A673 (cell line): ENCODE measurements at regions of chr2 and their contacts with region 1.

Region 1: DNA sequence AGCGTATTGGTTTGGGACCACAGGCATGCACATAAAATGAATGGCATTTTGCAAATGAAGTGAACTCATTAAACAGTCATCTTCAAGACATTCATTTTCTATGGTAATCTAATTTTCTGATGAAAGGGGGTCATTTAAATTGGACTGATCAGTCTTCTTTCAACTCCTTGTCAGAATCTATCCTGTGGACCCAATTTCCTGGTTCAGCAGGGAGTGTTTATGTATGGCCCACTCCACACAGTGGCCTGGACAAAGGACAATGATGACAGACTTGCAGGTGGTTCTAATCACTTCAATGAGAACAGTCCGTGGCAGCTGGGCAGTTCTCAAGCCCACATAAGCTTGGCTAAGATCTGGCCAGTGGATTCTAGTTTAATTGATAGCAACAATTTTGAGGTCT is 448.1 kb downstream of the DCDC2C start:
- DNase-seq: peak; percentile 94
- H3K4me3 ChIP-seq: no peak overlapping the region
- H3K27ac ChIP-seq: peak overlapping the region; percentile 96
- H3K4me1 ChIP-seq: peaks cover 31% of the 10 kb centered on the region
- H3K27me3 ChIP-seq: no peaks in the 10 kb centered on the region
- CTCF ChIP-seq: no peak

Region 2: DNA sequence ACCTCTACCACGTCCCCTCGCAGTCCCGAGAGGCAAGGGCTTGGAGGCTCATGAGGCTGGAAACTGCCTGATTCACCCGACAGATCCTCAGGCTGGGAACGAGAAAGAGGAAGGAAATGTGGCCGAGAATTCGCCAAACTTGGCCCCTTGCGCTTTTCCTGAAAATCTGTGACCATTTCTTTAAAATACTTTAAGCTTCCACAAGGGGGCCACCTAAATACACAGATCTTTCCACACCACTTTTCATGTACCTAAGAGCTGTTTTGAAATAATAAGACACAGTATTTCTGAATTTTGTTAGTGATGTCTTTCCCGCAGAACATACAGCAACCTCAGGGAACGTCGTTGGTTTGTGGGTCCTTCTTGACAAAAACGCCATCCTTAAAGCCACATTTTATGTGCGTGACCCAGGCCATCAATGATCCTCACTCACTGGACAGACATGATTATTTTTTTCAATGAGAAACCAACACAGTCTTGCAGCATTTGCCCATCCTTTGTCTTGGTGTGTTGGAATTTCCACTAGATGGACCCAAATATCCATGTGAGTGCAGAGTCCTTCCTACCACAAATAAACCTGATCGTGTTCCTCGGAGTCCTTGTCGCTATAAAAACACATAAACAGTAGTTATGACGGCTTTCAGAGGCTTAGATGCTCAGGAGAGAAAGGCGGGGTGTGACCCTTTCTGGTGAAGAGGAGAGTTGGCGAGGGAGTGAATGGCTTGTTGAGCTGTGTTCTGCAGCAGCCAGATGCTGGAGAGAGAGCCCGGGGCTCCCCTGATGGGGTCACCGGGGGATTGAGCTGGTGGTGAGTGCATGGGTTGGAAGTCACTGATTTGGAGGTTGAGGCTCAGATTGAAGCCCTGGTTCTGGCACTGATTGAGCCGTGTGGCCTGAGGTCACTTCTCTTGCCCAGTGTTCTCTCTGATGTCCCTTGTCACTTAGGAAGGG is 423.1 kb before region 1 on chr2:
- CTCF ChIA-PET with region 1: no interaction called
- POLR2A ChIA-PET with region 1: no interaction called
- intact Hi-C with region 1: loop called (anchors 5 kb)
- DNase-seq: peak; percentile 83
- H3K4me3 ChIP-seq: peak overlapping the region; percentile 12
- H3K27ac ChIP-seq: no peak overlapping the region
- H3K4me1 ChIP-seq: peaks cover 6% of the 10 kb centered on the region
- H3K27me3 ChIP-seq: no peaks in the 10 kb centered on the region
- CTCF ChIP-seq: peak; percentile 65

Region 3: GRCh38 chr2:3970791-3971652 is 180.5 kb before region 1 on chr2:
- CTCF ChIA-PET with region 1: no interaction called
- POLR2A ChIA-PET with region 1: no interaction called
- intact Hi-C with region 1: loop called (anchors 5 kb)
- DNase-seq: no peak
- H3K4me3 ChIP-seq: no peak overlapping the region
- H3K27ac ChIP-seq: no peak overlapping the region
- H3K4me1 ChIP-seq: peaks cover 4% of the 10 kb centered on the region
- H3K27me3 ChIP-seq: no peaks in the 10 kb centered on the region
- CTCF ChIP-seq: no peak

Region 4: GRCh38 chr2:4219571-4219970 is 68.0 kb after region 1 on chr2:
- CTCF ChIA-PET with region 1: no interaction called
- POLR2A ChIA-PET with region 1: no interaction called
- intact Hi-C with region 1: loop called (anchors 2 kb)
- DNase-seq: peak; percentile 93
- H3K4me3 ChIP-seq: no peak overlapping the region
- H3K27ac ChIP-seq: peak overlapping the region; percentile 74
- H3K4me1 ChIP-seq: peaks cover 39% of the 10 kb centered on the region
- H3K27me3 ChIP-seq: no peaks in the 10 kb centered on the region
- CTCF ChIP-seq: no peak

Region 5: GRCh38 chr2:4258563-4258962 is 107.0 kb after region 1 on chr2:
- CTCF ChIA-PET with region 1: no interaction called
- POLR2A ChIA-PET with region 1: no interaction called
- intact Hi-C with region 1: loop called (anchors 5 kb)
- DNase-seq: peak; percentile 50
- H3K4me3 ChIP-seq: no peak overlapping the region
- H3K27ac ChIP-seq: peak overlapping the region; percentile 64
- H3K4me1 ChIP-seq: peaks cover 45% of the 10 kb centered on the region
- H3K27me3 ChIP-seq: no peaks in the 10 kb centered on the region
- CTCF ChIP-seq: no peak

Region 6: DNA sequence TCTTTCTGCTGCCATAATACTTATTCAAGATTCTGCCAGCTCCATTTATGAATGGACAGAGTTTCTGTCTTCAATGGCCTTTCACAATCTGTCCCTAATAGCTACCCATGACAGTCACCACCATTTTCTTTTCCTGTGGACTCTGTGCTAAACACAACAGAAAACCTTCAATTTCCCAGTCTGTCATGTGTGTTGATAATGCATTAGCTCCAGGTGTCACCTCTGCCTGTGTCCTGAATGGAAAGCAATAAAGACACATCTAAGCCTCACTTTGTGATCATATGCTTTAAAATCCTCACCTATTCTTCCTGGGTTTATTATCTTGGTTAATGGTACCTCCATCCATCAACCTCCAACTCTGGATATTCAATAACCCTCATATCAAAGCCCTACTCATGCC is 324.1 kb after region 1 on chr2:
- CTCF ChIA-PET with region 1: no interaction called
- POLR2A ChIA-PET with region 1: no interaction called
- intact Hi-C with region 1: no loop called
- DNase-seq: no peak
- H3K4me3 ChIP-seq: no peak overlapping the region
- H3K27ac ChIP-seq: no peak overlapping the region
- H3K4me1 ChIP-seq: no peaks in the 10 kb centered on the region
- H3K27me3 ChIP-seq: no peaks in the 10 kb centered on the region
- CTCF ChIP-seq: no peak

Region 7: DNA sequence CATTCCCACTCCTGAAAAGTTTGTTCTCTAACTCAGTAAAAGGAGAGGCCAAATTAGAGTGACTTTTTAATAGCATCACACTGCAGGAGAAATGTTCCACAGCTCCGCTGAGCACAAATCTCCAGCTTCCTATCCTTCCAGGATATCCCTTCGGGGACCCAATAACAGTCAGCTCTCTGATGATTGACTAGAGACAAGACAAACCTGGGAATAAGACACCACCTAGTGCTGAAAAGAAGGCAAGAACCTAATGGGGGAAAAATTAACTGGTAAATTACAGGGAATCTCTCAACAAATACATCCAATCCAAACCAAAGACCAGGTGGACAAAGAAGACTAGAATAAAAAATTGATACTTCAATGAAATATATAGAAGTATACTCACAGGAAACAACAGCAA is 563.5 kb after region 1 on chr2:
- CTCF ChIA-PET with region 1: no interaction called
- POLR2A ChIA-PET with region 1: no interaction called
- intact Hi-C with region 1: loop called (anchors 10 kb)
- DNase-seq: peak; percentile 72
- H3K4me3 ChIP-seq: no peak overlapping the region
- H3K27ac ChIP-seq: peak overlapping the region; percentile 22
- H3K4me1 ChIP-seq: no peaks in the 10 kb centered on the region
- H3K27me3 ChIP-seq: no peaks in the 10 kb centered on the region
- CTCF ChIP-seq: peak; percentile 57

Region 8: DNA sequence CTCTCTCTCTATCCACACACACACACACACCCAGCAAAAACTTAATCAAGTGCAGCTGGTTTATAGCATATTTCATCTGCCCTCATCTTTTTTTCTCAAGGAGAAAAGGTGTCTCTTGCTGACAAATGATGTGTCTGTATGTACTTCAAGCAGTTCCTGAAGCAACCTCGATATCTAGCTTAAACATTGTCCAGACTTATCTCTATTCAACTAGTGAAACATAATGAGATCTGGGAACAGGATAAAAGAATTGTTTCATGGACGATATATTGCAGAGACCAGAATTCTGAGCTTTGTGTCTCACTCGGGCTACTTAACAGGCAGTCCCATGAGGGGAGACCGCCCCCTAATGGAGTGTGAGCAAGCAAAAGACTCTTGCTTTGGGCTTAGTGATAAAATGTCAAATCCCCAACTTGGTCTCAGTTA is 611.4 kb after region 1 on chr2:
- CTCF ChIA-PET with region 1: interaction called, 11 read pairs
- POLR2A ChIA-PET with region 1: interaction called, 14 read pairs
- intact Hi-C with region 1: loop called (anchors 1 kb)
- DNase-seq: peak; percentile 94
- H3K4me3 ChIP-seq: no peak overlapping the region
- H3K27ac ChIP-seq: peak overlapping the region; percentile 84
- H3K4me1 ChIP-seq: peaks cover 42% of the 10 kb centered on the region
- H3K27me3 ChIP-seq: no peaks in the 10 kb centered on the region
- CTCF ChIP-seq: peak; percentile 93